ENCODE measurements at regions of chrX and their contacts with region 1.

Region 1: DNA sequence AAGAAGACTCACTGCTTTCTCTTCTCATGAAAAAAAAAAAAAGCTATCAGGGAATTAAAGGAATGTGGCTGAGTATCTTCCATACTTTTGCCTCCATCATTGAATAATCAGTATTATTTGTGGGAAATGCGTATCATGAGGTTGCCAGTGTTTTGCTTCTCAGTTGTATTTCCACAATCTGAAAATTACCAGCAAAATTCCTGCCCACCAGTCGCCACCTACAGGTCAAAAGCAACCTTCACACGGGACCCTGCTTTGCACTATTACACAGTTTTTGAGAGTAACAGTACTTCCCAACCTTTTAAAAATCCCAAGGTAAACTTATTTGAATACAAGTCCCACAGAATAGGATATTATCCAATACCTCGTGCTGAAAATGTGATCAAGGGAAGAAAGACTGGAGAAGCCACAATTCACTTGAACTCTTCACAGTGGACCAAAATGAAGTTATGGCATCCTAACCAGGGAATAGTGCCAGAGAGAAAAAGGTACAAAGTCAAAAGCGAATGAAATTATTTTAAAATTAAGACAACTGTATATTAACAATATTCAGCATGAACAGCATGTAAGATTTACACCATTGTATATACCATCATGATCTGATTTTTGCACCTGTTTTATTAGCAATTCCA is 30.4 kb downstream of the PGRMC1 start:
- DNase-seq: no peak
- ATAC-seq: no peak
- H3K4me3 Mint-ChIP-seq: no peak overlapping the region
- H3K27ac Mint-ChIP-seq: no peak overlapping the region
- H3K4me1 Mint-ChIP-seq: peaks cover 2% of the 10 kb centered on the region
- H3K27me3 Mint-ChIP-seq: peaks cover 2% of the 10 kb centered on the region
- CTCF ChIP-seq: no peak

Region 2: DNA sequence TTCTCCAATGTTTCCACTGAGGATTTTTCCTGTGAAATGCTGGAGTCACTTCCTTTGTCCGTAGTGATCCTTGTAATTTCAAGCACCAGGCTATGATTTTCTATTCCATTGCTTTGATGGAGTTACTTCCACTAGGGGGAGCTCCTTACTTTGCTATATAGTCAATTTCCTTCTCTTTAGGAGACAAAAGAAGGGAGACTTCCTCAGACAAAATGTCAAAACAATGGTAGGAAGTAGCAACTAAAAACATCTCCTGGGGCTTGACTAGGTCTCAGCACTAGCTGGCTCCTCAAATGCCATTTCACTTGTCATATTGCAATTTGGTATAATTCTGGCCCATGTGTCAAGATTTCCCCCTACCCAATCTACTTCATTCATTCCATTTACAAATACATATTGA is 418.8 kb before region 1 on chrX:
- CTCF ChIA-PET with region 1: no interaction called
- POLR2A ChIA-PET with region 1: no interaction called
- intact Hi-C with region 1: loop called (anchors 1 kb)
- DNase-seq: no peak
- ATAC-seq: no peak
- H3K4me3 Mint-ChIP-seq: no peak overlapping the region
- H3K27ac Mint-ChIP-seq: no peak overlapping the region
- H3K4me1 Mint-ChIP-seq: no peaks in the 10 kb centered on the region
- H3K27me3 Mint-ChIP-seq: no peaks in the 10 kb centered on the region
- CTCF ChIP-seq: no peak

Region 3: GRCh38 chrX:119118780-119119395 is 147.6 kb before region 1 on chrX:
- CTCF ChIA-PET with region 1: interaction called, 7 read pairs
- POLR2A ChIA-PET with region 1: no interaction called
- intact Hi-C with region 1: loop called (anchors 1 kb)
- DNase-seq: peak; percentile 14
- ATAC-seq: peak; percentile 86
- H3K4me3 Mint-ChIP-seq: no peak overlapping the region
- H3K27ac Mint-ChIP-seq: no peak overlapping the region
- H3K4me1 Mint-ChIP-seq: no peaks in the 10 kb centered on the region
- H3K27me3 Mint-ChIP-seq: peaks cover 2% of the 10 kb centered on the region
- CTCF ChIP-seq: no peak

Region 4: DNA sequence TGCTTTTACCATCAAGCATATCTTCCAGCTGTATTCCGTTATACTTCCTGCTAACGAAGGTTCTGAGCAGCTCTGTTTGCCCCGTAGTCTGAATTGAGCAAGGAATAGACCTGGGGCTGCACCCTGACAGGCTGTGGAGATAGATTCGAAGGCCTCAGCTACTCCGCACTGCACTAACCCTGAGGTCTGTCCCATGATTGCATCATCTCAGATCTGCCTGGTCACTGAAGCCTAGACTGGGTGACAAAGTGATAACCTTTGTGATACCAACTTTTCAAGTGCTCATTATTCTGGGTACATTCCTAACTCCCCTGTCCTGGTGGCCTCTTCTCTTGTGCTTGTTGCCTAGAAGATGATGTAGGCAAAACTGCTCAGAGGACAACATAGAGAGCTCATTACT is 60.3 kb before region 1 on chrX:
- CTCF ChIA-PET with region 1: no interaction called
- POLR2A ChIA-PET with region 1: no interaction called
- intact Hi-C with region 1: no loop called
- DNase-seq: no peak
- ATAC-seq: no peak
- H3K4me3 Mint-ChIP-seq: no peak overlapping the region
- H3K27ac Mint-ChIP-seq: no peak overlapping the region
- H3K4me1 Mint-ChIP-seq: no peaks in the 10 kb centered on the region
- H3K27me3 Mint-ChIP-seq: peaks cover 11% of the 10 kb centered on the region
- CTCF ChIP-seq: no peak

Region 5: DNA sequence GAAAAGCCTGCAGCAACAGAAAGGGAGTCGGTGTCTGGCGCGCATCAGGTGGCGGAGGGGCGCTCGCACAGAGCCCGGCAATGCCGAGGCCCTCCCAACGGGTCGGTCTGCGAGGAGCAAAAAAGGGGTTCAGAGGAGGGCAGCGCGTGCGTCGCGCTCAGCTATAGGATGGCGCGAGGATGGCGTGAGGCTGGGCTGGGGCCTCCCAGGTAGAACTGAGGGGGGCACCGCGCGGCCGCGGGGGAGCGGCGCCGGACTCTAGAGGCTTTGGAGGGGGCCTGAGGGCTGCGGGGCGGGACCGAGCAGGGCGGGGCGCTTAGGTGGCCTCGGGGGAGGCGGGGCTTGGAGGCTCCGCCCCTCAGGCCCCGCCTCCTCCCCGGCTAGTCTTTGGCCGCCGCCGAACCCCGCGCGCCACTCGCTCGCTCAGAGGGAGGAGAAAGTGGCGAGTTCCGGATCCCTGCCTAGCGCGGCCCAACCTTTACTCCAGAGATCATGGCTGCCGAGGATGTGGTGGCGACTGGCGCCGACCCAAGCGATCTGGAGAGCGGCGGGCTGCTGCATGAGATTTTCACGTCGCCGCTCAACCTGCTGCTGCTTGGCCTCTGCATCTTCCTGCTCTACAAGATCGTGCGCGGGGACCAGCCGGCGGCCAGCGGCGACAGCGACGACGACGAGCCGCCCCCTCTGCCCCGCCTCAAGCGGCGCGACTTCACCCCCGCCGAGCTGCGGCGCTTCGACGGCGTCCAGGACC is 30.4 kb before region 1 on chrX and contains the start of gene PGRMC1:
- CTCF ChIA-PET with region 1: no interaction called
- POLR2A ChIA-PET with region 1: no interaction called
- intact Hi-C with region 1: loop called (anchors 2 kb)
- DNase-seq: peak; percentile 64
- ATAC-seq: peak; percentile 97
- H3K4me3 Mint-ChIP-seq: peak within 1 kb of the TSS; percentile 89
- H3K27ac Mint-ChIP-seq: peak within 1 kb of the TSS; percentile 82
- H3K4me1 Mint-ChIP-seq: peaks cover 16% of the 10 kb centered on the region
- H3K27me3 Mint-ChIP-seq: no peaks in the 10 kb centered on the region
- CTCF ChIP-seq: no peak
- total RNA-seq, gene PGRMC1: 8.5 and 9.8 TPM in 2 replicates

Measured in activated B cell treated with CpG ODN at 0.5 μM for 24 hours (primary cell).